ENCODE measurements at regions of chr19 and their contacts with region 1.

Region 1: DNA sequence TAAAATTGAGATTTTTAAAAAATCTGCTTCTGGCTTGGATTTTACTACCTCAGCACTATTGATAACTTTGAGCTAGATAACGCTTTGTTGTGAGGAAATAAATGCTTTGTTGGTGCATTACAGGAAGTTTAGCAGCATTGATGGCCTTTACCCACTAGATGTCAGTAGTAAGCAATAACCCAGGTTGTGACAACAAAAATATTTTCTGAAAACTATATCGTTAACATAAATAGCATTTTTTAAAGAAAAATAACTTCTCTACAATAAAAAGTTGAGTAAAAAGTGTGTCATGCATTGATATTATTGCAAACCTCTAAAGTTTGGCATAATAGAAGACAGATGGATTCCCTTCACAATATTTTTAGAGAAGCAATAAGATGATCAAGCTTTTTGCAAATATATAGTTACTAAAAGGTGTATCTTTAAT is 1246.5 kb downstream of the UQCRFS1 start:
- DNase-seq: no peak
- CTCF ChIP-seq: peak; percentile 74

Region 2: DNA sequence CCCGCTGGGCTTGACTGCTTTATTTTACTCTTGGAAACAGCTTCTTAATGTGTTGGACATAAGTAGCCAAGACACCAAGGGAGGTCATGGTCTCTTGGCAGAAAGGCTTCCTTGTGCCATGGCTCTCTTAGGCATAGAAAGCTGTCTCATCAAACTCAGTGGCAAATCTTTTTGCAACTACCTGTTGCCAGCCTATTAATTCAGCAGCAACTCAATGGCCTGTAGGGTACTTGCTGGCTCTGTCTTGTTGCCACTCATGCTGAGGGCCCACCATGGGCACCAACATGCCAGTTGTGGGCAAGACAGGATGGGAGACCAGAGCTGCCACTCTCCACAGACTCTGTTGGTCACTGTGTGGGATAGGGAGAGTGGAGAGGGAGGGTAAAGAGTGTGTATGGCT is 37.1 kb after region 1 on chr19:
- CTCF ChIA-PET with region 1: no interaction called
- POLR2A ChIA-PET with region 1: no interaction called
- DNase-seq: no peak
- CTCF ChIP-seq: no peak

Region 3: GRCh38 chr19:28039677-28040381 is 73.4 kb after region 1 on chr19:
- CTCF ChIA-PET with region 1: no interaction called
- POLR2A ChIA-PET with region 1: no interaction called
- DNase-seq: no peak
- CTCF ChIP-seq: no peak

Region 4: DNA sequence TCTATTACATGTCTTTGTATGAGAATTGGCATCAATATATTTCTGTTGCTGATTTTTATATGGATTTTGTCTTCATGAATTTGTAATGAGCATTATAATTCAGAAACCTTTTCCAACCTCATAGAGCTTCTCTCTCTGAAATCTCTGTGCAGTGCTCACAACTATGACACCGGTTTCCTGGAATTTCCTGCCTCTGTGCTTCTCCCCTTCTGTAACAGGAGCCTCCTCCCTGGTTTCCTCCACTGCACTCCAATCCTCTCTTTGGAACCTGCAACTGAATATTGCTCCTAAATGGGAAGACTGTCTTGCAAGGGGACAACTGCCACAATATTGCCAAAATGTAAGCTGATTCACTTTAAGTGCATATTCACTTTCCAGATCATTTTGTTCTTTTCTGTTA is 98.6 kb after region 1 on chr19:
- CTCF ChIA-PET with region 1: no interaction called
- POLR2A ChIA-PET with region 1: no interaction called
- DNase-seq: no peak
- CTCF ChIP-seq: no peak

Region 5: GRCh38 chr19:28213470-28214082 is 247.2 kb after region 1 on chr19:
- CTCF ChIA-PET with region 1: interaction called, 13 read pairs
- POLR2A ChIA-PET with region 1: no interaction called
- DNase-seq: no peak
- CTCF ChIP-seq: no peak

Region 6: GRCh38 chr19:28324275-28325060 is 358.1 kb after region 1 on chr19:
- CTCF ChIA-PET with region 1: interaction called, 97 read pairs
- POLR2A ChIA-PET with region 1: no interaction called
- DNase-seq: no peak
- CTCF ChIP-seq: no peak